PC-3 (cell line): ENCODE measurements at regions of chr3 and their contacts with region 1.

Region 1: GRCh38 chr3:73056014-73056844 is 5.2 kb upstream of the EBLN2 start:
- DNase-seq: peak; percentile 56
- ATAC-seq: peak; percentile 25; the same call in 1 of the 2 replicates
- H3K4me3 ChIP-seq: no peak overlapping the region
- H3K27ac ChIP-seq: no peak overlapping the region
- H3K4me1 ChIP-seq: peaks cover 14% of the 10 kb centered on the region
- H3K27me3 ChIP-seq: no peaks in the 10 kb centered on the region
- CTCF ChIP-seq: peak; percentile 78

Region 2: DNA sequence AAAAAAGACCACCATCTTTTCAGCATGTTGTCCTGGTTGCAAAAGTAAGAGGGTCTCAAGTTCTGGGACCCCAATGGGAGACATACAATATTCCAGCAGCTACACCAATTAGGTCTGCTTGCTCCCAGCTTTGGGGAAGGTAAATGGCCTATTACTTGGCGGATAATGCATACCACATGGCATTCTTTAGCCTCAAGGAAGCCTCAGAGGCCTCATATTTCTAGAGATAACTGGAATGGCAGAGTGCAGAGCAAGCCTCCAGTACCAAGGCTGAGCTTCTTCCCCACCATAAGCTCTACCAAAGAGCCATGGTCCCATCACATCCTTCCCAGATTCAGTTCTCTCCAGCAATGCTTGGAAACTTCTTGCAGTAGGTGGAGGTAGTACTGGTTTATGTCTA is 701.7 kb before region 1 on chr3:
- CTCF ChIA-PET with region 1: no interaction called
- POLR2A ChIA-PET with region 1: no interaction called
- intact Hi-C with region 1: no loop called
- DNase-seq: no peak
- ATAC-seq: no peak
- H3K4me3 ChIP-seq: no peak overlapping the region
- H3K27ac ChIP-seq: no peak overlapping the region
- H3K4me1 ChIP-seq: no peaks in the 10 kb centered on the region
- H3K27me3 ChIP-seq: peaks cover 4% of the 10 kb centered on the region; the same call in 1 of the 2 replicates
- CTCF ChIP-seq: no peak

Region 3: DNA sequence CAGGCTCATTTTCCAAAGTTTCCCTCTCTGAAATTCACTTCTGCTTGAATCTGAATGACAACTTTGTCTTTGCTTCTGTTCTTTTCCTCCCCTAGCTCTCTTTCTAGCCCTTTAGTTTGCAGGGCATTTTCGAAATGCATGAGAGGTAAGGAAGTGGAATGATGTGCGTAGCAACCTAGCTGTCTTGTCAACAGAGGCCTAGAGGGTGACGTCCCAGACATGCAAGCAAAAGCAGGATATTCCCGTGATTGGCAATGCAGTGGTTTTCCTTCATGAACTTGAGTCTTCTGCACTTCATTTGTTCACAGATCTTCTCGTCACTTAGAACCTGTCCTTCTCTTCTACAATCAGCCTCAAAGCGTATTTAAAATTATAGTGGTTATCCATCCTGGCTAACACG is 111.5 kb before region 1 on chr3:
- CTCF ChIA-PET with region 1: interaction called, 6 read pairs
- POLR2A ChIA-PET with region 1: interaction called, 6 read pairs
- intact Hi-C with region 1: loop called (anchors 1 kb)
- DNase-seq: no peak
- ATAC-seq: no peak
- H3K4me3 ChIP-seq: no peak overlapping the region
- H3K27ac ChIP-seq: 0 out of 2 replicates have a peak overlapping the region, but pooled peaks have one; percentile 69
- H3K4me1 ChIP-seq: peaks cover 7% of the 10 kb centered on the region
- H3K27me3 ChIP-seq: no peaks in the 10 kb centered on the region
- CTCF ChIP-seq: no peak

Region 4: DNA sequence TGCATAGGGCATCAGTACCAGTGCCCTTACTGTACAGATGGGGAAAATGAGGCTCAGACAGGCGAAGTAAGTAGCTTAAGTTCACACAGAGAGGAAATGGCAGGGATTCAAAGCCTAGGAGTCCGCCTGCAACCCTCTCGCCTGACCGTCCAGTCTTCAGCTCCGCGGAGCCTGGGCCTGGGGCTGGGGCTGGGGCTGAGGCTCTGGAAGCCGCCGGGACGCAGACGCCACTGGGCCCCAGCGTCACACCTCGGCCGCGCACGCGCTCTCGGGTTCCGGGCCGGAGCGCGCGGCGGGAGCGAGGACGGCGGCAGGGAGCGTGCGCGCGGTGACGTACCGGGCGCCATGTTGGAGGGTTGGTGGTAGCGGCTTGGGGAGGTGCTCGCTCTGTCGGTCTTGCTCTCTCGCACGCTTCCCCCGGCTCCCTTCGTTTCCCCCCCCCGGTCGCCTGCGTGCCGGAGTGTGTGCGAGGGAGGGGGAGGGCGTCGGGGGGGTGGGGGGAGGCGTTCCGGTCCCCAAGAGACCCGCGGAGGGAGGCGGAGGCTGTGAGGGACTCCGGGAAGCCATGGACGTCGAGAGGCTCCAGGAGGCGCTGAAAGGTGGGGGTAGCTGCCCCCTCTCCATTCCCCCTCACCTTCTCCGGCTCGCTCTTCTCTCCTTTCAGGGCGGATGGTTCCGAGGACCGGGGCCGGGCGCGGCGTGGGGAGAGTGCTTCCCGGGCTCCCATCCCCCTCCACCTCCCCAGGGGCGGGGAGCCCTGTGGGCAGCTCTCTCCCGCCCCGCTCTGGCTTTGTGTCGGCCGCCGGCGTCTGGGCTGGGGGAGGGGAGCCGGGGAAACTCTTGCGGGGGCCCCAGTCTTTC is 59.5 kb before region 1 on chr3 and contains the start of gene PPP4R2:
- CTCF ChIA-PET with region 1: interaction called, 4 read pairs
- POLR2A ChIA-PET with region 1: no interaction called
- intact Hi-C with region 1: loop called (anchors 1 kb)
- DNase-seq: peak; percentile 93
- ATAC-seq: peak; percentile 82
- H3K4me3 ChIP-seq: peak within 1 kb of the TSS; percentile 85
- H3K27ac ChIP-seq: peak within 1 kb of the TSS; percentile 75
- H3K4me1 ChIP-seq: peaks cover 28% of the 10 kb centered on the region
- H3K27me3 ChIP-seq: no peaks in the 10 kb centered on the region
- CTCF ChIP-seq: no peak
- total RNA-seq, gene PPP4R2: 40.5 and 62.7 TPM in 2 replicates

Region 5: GRCh38 chr3:73037369-73037699 is 18.9 kb before region 1 on chr3:
- CTCF ChIA-PET with region 1: no interaction called
- POLR2A ChIA-PET with region 1: no interaction called
- intact Hi-C with region 1: loop called (anchors 1 kb)
- DNase-seq: peak; percentile 14
- ATAC-seq: peak; percentile 66
- H3K4me3 ChIP-seq: no peak overlapping the region
- H3K27ac ChIP-seq: peak overlapping the region; percentile 28
- H3K4me1 ChIP-seq: peaks cover 22% of the 10 kb centered on the region
- H3K27me3 ChIP-seq: no peaks in the 10 kb centered on the region
- CTCF ChIP-seq: no peak

Region 6: GRCh38 chr3:73074781-73075180 is 18.6 kb after region 1 on chr3:
- CTCF ChIA-PET with region 1: no interaction called
- POLR2A ChIA-PET with region 1: no interaction called
- intact Hi-C with region 1: no loop called
- DNase-seq: no peak
- ATAC-seq: no peak
- H3K4me3 ChIP-seq: no peak overlapping the region
- H3K27ac ChIP-seq: no peak overlapping the region
- H3K4me1 ChIP-seq: no peaks in the 10 kb centered on the region
- H3K27me3 ChIP-seq: no peaks in the 10 kb centered on the region
- CTCF ChIP-seq: no peak

Region 7: DNA sequence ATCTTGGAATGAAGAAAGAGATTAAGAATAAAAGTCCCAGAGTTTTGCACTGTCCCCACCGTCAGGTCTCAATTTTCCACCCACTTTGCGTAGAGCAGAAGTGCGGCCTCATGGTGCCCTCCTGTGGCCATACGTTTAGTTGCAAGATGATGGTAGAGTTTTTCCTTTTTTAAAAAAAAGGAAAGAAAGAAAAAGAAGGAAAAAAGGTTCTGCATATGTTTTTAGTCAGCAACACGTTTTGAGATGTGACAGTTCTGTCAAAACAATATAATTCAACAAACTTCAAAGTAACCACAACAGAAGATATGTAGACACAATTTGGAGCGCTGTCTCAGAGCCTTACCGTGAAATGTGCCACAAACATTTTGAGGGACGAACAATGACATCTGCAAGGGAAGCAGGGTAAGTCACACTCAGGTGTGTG is 29.9 kb after region 1 on chr3:
- CTCF ChIA-PET with region 1: interaction called, 13 read pairs
- POLR2A ChIA-PET with region 1: no interaction called
- intact Hi-C with region 1: no loop called
- DNase-seq: peak; percentile 68
- ATAC-seq: peak; percentile 79
- H3K4me3 ChIP-seq: no peak overlapping the region
- H3K27ac ChIP-seq: no peak overlapping the region
- H3K4me1 ChIP-seq: no peaks in the 10 kb centered on the region
- H3K27me3 ChIP-seq: no peaks in the 10 kb centered on the region
- CTCF ChIP-seq: peak; percentile 93

Region 8: GRCh38 chr3:73141525-73141924 is 85.3 kb after region 1 on chr3:
- CTCF ChIA-PET with region 1: no interaction called
- POLR2A ChIA-PET with region 1: no interaction called
- intact Hi-C with region 1: no loop called
- DNase-seq: no peak
- ATAC-seq: no peak
- H3K4me3 ChIP-seq: no peak overlapping the region
- H3K27ac ChIP-seq: no peak overlapping the region
- H3K4me1 ChIP-seq: no peaks in the 10 kb centered on the region
- H3K27me3 ChIP-seq: peaks cover 79% of the 10 kb centered on the region
- CTCF ChIP-seq: no peak